ENCODE measurements at regions of chr5 and their contacts with region 1.

Region 1: DNA sequence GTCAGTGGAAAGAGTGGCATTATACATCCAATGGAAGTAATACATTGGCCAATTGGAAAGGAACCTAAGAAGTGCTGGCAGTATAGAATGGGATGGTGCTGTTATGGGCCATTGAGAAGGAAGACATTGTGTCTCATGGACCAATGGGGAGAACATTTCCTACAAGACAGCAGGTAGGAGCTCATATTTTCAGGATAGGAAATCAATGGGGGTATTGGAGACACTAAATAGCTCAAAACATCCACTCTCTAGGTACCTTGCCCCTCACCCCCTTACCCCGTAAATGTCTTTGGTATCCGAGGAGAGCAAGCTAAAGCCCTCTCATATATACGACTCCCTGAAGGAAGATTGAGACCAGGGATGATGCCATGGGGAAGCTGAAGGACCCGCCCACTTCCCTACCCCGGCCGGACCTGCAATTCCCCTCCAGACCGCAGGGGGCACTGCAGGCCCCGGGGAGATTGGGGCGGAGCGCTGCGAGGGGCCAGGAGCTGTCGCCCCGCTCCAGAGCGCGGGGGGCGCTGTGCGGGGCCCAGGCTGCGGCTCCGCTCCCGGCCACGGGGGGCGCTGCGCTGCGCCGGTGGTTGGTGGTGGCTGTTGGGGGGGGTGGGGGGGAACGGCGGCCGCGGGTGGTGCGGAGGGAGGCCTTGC is at the start of gene KDM3B:
- DNase-seq: peak; percentile 88
- H3K4me3 Mint-ChIP-seq: peak within 1 kb of the TSS; percentile 93
- H3K27ac Mint-ChIP-seq: peak within 1 kb of the TSS; percentile 98
- H3K4me1 Mint-ChIP-seq: peaks cover 47% of the 10 kb centered on the region
- H3K27me3 Mint-ChIP-seq: no peaks in the 10 kb centered on the region
- total RNA-seq, gene KDM3B: 60.4 to 65.7 TPM

Region 2: DNA sequence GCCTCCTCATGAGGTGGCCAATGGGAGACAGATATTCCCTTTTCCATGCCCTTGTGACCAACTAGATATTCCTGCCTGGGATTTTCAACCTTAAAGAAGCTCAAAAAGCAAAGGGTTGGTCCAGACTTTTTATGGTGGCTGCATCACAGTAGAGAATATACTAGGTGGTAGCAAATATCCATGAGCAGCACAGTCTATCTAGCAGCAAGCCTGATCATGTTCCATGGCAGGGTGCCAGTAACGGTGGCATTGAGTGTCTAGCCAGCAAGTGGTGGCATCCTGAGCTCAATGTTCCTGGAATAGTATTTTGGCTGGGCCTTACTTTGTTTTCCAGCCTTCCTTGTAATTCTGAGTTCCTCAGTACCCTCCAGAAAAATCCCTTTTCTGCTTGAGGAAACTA is 46.4 kb before region 1 on chr5:
- CTCF ChIA-PET with region 1: interaction called, 16 read pairs
- POLR2A ChIA-PET with region 1: no interaction called
- DNase-seq: no peak
- H3K4me3 Mint-ChIP-seq: no peak overlapping the region
- H3K27ac Mint-ChIP-seq: no peak overlapping the region
- H3K4me1 Mint-ChIP-seq: peaks cover 1% of the 10 kb centered on the region
- H3K27me3 Mint-ChIP-seq: no peaks in the 10 kb centered on the region

Region 3: DNA sequence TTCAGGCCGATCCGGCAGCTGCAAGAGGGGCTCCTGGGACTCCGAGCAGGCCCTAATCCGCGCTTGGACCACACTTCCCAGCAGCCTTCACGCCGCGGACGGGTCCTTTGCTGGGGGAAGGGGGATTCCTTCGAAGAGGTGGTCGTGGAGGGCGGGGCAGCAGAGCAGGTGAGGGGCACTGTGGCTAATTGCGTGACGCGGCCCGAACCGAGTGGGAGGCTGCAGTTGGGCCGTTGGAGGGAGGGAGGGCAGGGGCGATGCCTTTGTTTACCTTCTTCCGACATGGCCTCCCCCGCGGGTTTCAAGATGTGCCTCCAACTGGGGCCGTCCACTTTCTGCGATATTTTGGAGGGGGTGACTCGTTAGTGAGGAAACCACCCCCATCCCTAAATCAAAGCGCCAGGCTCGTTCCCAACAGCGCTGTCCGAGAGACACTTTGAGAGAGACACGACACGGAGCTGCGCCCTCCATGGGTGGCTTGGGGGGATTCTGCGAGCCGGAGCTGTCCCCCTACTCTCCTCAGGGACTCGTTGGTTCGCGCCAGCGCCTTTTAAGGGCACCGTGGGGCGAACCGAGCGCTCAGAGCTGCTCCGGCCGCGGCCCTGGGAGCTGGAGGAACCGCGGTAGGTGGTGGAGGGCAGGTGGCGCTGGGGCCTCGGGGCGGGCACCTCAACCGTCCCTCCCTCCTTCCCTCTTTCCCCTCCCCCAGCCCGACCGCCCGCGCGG is 14.3 kb before region 1 on chr5 and contains the start of gene FAM53C:
- CTCF ChIA-PET with region 1: interaction called, 444 read pairs
- POLR2A ChIA-PET with region 1: interaction called, 10 read pairs
- DNase-seq: peak; percentile 92
- H3K4me3 Mint-ChIP-seq: peak within 1 kb of the TSS; percentile 83
- H3K27ac Mint-ChIP-seq: peak within 1 kb of the TSS; percentile 97
- H3K4me1 Mint-ChIP-seq: peaks cover 44% of the 10 kb centered on the region
- H3K27me3 Mint-ChIP-seq: no peaks in the 10 kb centered on the region
- total RNA-seq, gene FAM53C: 23.7 to 25.5 TPM

Region 4: DNA sequence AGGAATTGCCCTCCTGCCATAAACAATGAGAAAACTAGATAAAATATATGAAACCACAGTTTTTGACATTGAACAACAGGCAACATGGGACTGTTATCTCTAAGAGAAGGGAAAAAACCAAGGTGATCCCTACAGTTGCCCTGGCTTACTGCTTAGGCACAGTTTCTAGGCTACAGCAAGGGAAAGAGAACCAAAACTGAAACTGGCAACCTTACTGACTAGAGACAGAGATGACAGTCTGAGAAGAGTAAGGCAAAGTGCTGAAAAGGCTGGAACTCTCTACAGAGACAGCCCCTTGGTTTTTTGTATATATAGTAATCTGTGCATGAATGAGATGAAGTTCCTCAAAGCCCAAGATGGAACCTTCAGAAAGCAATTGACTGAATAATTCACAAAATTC is 50.4 kb after region 1 on chr5:
- CTCF ChIA-PET with region 1: interaction called, 14 read pairs
- POLR2A ChIA-PET with region 1: no interaction called
- DNase-seq: peak; percentile 12
- H3K4me3 Mint-ChIP-seq: no peak overlapping the region
- H3K27ac Mint-ChIP-seq: peak overlapping the region; percentile 39
- H3K4me1 Mint-ChIP-seq: peaks cover 25% of the 10 kb centered on the region
- H3K27me3 Mint-ChIP-seq: no peaks in the 10 kb centered on the region

Region 5: GRCh38 chr5:138438724-138439476 is 86.7 kb after region 1 on chr5 and contains the start of gene REEP2:
- CTCF ChIA-PET with region 1: interaction called, 10 read pairs
- POLR2A ChIA-PET with region 1: no interaction called
- DNase-seq: peak; percentile 57
- H3K4me3 Mint-ChIP-seq: peak within 1 kb of the TSS; percentile 71
- H3K27ac Mint-ChIP-seq: peak within 1 kb of the TSS; percentile 41
- H3K4me1 Mint-ChIP-seq: peaks cover 9% of the 10 kb centered on the region
- H3K27me3 Mint-ChIP-seq: peaks cover 2% of the 10 kb centered on the region
- total RNA-seq, gene REEP2: 0.62 to 0.77 TPM

Measured in activated CD4-positive, alpha-beta T cell treated with anti-CD3 and anti-CD28 coated beads, Interleukin-2, amount 10 ng/mL, durations not matched to agents 7 days and 5 days (primary cell).